Activated T-helper 1 cell treated with anti-CD3 and anti-CD28 coated beads, Interleukin-12 subunit alpha, Interleukin-12 subunit beta, Interleukin-2, Interleukin-4 antibody, amounts not matched to agents 30 ng/mL and 10 ng/mL and 1 ng/mL, durations not matched to agents 14 hours and 24 hours and 36 hours (primary cell): ENCODE measurements at regions of chr10 and their contacts with region 1.

Region 1: GRCh38 chr10:70404036-70404786 is at the start of gene EIF4EBP2:
- DNase-seq: peak; percentile 99
- H3K4me3 Mint-ChIP-seq: peak within 1 kb of the TSS; percentile 96
- H3K27ac Mint-ChIP-seq: peak within 1 kb of the TSS; percentile 92
- H3K4me1 Mint-ChIP-seq: peaks cover 40% of the 10 kb centered on the region
- H3K27me3 Mint-ChIP-seq: peaks cover 2% of the 10 kb centered on the region
- total RNA-seq, gene EIF4EBP2: 36.6 and 37.7 TPM in 2 replicates

Region 2: DNA sequence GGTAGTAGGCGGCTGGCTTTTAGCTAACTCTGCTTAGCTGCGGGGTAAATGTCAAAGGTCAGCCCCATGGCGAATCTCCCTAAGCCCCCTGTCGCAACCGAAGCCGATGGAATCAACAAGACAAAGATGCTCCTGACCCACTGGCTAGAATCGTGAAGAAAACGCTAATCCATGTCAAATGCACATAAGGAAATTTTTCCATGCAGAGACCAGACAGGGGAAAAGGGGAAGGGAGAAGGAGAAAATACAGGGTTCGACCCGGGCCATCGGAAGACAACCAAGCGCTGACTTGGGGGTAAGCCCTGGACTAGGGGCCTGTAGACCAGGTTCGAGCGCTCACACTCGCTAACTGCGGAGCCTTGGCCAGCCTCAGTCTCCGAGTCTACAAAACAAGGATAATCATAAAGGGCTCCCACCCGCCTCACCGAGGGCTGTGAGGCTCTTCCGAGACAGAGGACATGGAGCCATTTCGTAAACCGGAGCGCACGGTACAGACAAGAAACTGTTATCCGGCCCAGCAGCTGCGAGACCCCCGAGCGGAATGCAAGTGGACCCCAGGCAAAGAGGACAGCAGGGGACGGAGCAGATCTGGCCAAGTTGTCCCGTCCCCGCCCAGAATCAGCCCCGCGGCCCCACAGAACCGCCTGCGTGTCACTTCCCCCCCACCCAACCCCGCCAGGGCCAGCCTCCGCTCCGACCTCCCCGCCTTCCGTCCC is 234.4 kb before region 1 on chr10:
- intact Hi-C with region 1: loop called (anchors 1 kb)
- DNase-seq: no peak
- H3K4me3 Mint-ChIP-seq: peak overlapping the region; percentile 96
- H3K27ac Mint-ChIP-seq: peak overlapping the region; percentile 83
- H3K4me1 Mint-ChIP-seq: peaks cover 65% of the 10 kb centered on the region
- H3K27me3 Mint-ChIP-seq: no peaks in the 10 kb centered on the region

Region 3: GRCh38 chr10:70381471-70382421 is 22.5 kb before region 1 on chr10:
- intact Hi-C with region 1: loop called (anchors 1 kb)
- DNase-seq: peak; percentile 31
- H3K4me3 Mint-ChIP-seq: peak overlapping the region; percentile 86
- H3K27ac Mint-ChIP-seq: no peak overlapping the region
- H3K4me1 Mint-ChIP-seq: peaks cover 14% of the 10 kb centered on the region
- H3K27me3 Mint-ChIP-seq: peaks cover 14% of the 10 kb centered on the region

Region 4: GRCh38 chr10:70478191-70479164 is 74.3 kb after region 1 on chr10 and contains the start of gene PALD1:
- intact Hi-C with region 1: loop called (anchors 2 kb)
- DNase-seq: no peak
- H3K4me3 Mint-ChIP-seq: peak within 1 kb of the TSS; percentile 78
- H3K27ac Mint-ChIP-seq: peak within 1 kb of the TSS; percentile 85
- H3K4me1 Mint-ChIP-seq: peaks cover 49% of the 10 kb centered on the region
- H3K27me3 Mint-ChIP-seq: peaks cover 59% of the 10 kb centered on the region
- total RNA-seq, gene PALD1: 0.83 and 0.88 TPM in 2 replicates

Region 5: GRCh38 chr10:71372882-71373495 is 968.8 kb after region 1 on chr10:
- intact Hi-C with region 1: loop called (anchors 2 kb)
- DNase-seq: no peak
- H3K4me3 Mint-ChIP-seq: no peak overlapping the region
- H3K27ac Mint-ChIP-seq: no peak overlapping the region
- H3K4me1 Mint-ChIP-seq: peaks cover 14% of the 10 kb centered on the region
- H3K27me3 Mint-ChIP-seq: peaks cover 7% of the 10 kb centered on the region

Region 6: GRCh38 chr10:71459513-71459912 is 1055.3 kb after region 1 on chr10:
- intact Hi-C with region 1: no loop called
- DNase-seq: no peak
- H3K4me3 Mint-ChIP-seq: no peak overlapping the region
- H3K27ac Mint-ChIP-seq: no peak overlapping the region
- H3K4me1 Mint-ChIP-seq: no peaks in the 10 kb centered on the region
- H3K27me3 Mint-ChIP-seq: peaks cover 2% of the 10 kb centered on the region

Region 7: DNA sequence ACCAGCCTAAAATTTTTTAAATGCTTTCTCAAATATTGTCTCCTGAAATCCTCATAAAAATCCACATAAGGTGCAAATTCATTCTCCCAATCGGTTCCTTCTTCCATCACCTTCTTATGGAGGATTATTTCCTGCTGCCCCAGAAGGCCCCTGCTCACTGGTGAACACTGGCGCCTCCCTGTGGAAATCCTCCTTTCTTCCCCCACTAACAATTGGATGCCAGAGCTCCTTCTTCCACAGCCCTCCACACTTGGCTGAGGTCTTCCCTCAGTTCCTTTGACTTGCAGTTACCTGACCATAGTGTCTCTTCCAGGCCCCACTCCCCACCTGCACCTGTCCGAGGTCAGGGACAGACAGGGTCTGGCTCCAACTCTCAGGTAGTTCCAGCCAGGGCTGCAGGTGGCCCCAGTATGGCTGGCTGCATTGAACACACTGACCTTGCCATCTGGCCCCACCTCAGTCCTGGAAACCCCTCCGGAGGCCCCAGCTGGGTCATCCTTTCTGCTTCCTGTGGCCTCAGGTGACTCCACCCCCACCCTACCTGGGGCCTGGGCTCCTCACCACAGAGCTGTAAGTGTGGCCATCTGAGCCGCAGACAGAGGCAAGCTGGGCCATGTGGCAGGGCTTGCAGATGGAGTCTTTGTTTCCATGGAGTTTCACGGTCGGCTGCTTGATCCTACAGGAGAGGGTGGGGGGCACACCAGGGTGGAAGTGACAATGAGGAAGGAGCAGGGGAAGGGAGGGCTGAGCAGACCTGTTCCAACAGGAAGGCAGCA is 1665.7 kb after region 1 on chr10:
- intact Hi-C with region 1: loop called (anchors 10 kb)
- DNase-seq: no peak
- H3K4me3 Mint-ChIP-seq: no peak overlapping the region
- H3K27ac Mint-ChIP-seq: no peak overlapping the region
- H3K4me1 Mint-ChIP-seq: peaks cover 11% of the 10 kb centered on the region
- H3K27me3 Mint-ChIP-seq: no peaks in the 10 kb centered on the region